Breast epithelium (tissue), 4 donors: ENCODE measurements at regions of chr4 and their contacts with region 1.

Region 1: DNA sequence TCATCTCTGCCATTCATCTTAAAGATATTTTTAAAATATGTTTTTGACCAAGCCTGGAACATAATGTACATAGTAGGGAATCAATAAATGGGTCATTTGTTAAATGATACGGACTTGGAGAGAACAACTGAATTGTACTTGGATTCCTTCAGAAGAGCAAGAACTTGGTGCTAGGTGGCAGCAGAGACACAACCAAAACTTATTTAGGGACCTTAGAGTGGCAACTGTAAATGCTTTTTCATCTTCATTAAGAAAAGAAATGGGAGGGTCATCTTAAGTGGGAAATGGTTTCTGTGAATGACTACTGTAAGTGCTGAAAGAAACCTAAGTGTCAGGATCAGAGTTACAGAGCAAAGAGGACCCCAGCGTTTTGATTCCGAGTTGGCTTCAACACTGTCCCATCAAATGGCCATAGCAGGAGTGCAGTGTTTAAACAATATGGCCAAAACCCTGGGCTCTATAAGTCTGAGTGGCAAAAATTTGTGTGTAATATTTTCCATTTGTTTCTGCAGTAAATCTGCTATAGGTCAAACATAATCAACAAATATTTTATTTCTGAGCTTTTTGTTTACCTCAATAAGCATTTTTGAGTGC is 213.6 kb downstream of the PALLD start:
- DNase-seq: peak in 1 of 2 donors; percentile 53
- H3K4me3 ChIP-seq: no peak overlapping the region
- H3K27ac ChIP-seq: no peak overlapping the region
- H3K4me1 ChIP-seq: no peaks in the 10 kb centered on the region
- H3K27me3 ChIP-seq: no peaks in the 10 kb centered on the region
- CTCF ChIP-seq: peak in 2 of 3 donors; percentile 41 to 67
- POLR2A ChIP-seq: no peak

Region 2: DNA sequence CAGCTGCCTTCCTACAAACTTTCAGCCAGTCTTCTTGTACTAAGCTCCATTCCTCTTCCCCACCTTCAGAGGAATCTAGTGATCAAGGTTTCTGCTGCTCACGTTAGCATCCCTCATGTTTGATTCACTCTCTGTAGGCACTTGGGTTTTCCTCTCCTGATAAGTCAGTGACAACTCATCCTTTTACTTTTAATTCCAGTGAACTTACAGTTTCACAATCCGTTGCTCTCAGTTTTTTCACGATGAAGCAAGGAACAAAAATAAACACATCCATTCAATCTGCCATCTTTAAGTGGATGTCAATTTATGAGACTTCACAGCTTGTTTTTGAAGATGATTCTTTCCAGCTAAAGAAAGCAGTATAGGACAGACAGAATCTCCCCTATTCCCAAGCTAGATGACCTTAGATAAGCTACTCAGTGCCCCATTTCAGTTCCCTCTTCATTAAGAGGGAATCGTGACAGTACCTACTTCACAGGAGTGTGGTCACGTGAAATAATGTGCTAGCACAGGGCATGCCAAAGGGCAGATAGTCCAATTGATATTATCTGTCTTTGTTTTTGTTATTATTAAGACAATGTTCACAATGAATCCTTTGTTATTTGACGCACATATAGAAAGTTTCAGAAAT is 20.7 kb after region 1 on chr4:
- intact Hi-C with region 1: no loop called
- DNase-seq: no peak
- H3K4me3 ChIP-seq: no peak overlapping the region
- H3K27ac ChIP-seq: no peak overlapping the region
- H3K4me1 ChIP-seq: no peaks in the 10 kb centered on the region
- H3K27me3 ChIP-seq: no peaks in the 10 kb centered on the region
- CTCF ChIP-seq: no peak
- POLR2A ChIP-seq: no peak

Region 3: DNA sequence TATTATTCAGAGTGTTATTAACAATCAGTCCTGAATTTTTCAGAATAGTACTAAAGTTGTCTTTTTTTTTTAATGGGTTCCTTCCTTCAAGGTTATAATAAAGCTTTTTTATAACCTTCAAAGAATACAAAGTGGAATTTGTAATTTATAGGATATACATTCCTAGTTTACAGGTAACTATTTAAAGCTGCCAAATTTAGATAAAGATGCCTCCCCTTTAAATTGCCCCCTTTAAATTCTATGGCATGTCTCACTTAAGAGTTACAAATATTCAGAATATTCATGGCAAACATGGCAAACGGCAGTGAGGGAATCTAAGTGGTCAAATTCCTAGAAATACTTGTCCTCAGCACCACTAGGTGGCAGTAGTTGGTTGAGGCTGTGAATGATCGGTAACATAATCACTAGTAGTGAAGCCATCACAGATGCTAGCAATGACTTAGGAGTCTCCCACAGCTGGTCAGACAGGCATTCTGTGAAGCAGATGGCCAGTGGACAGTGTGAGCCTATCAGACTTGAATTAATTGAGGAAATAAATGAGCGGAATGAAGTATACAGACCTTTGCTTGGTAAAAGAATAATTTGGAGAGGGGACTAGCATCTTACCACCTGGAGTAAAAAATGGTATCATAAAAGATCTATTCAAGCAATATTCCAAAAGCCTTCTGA is 213.2 kb after region 1 on chr4:
- intact Hi-C with region 1: loop called (anchors 10 kb)
- DNase-seq: no peak
- H3K4me3 ChIP-seq: no peak overlapping the region
- H3K27ac ChIP-seq: no peak overlapping the region
- H3K4me1 ChIP-seq: no peaks in the 10 kb centered on the region
- H3K27me3 ChIP-seq: no peaks in the 10 kb centered on the region
- CTCF ChIP-seq: peak; percentile 59 to 79 (median 63)
- POLR2A ChIP-seq: no peak